Activated CD8-positive, alpha-beta T cell treated with anti-CD3 and anti-CD28 coated beads, Interleukin-2, amount 10 ng/mL, durations not matched to agents 7 days and 5 days (primary cell): ENCODE measurements at regions of chr6 and their contacts with region 1.

Region 1: DNA sequence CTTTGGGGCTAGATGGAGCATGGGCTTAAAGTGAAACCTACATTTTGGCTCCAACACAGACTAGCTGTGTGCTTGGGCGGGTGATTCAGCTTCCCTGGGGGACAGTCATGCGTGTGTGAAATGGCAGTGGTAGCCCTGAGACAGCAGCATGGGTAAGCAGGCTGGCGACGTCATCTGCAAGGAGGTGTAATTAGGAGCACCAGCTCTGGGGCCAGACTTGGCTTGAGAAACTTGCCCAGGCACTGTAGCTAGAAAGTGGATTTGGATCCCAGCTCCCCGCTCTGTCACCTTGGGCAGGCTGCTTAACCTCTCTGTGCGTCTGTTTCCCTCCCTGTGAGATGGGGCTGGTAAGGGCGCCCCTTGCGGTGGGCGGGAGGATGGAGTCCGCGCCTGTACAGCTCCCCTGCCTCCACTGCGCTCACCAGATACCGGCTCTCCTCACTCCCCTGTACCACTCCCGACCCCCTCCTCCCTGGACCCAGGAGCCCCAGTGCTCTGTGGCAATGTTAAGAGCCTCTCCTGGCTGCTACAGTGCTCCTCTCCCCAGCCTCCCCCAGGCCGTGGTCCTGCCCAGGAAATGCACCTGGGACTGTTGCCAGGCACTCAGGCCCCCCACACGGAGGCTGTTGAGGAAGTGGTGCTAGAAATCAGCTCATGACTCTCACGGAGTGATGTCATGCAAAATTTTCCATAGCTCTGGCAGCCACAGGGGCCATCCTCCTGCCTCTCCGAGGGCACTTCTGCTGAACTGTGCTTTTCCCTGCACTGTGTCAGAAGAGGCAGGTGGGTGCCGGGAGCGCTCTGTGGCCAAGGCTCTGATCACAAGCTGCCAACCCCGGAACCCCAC is 44.6 kb downstream of the SYNJ2 start:
- DNase-seq: peak; percentile 89
- ATAC-seq: peak; percentile 80
- H3K4me3 Mint-ChIP-seq: peak overlapping the region; percentile 69
- H3K27ac Mint-ChIP-seq: peak overlapping the region; percentile 99
- H3K4me1 Mint-ChIP-seq: peaks cover 52% of the 10 kb centered on the region
- H3K27me3 Mint-ChIP-seq: no peaks in the 10 kb centered on the region

Region 2: DNA sequence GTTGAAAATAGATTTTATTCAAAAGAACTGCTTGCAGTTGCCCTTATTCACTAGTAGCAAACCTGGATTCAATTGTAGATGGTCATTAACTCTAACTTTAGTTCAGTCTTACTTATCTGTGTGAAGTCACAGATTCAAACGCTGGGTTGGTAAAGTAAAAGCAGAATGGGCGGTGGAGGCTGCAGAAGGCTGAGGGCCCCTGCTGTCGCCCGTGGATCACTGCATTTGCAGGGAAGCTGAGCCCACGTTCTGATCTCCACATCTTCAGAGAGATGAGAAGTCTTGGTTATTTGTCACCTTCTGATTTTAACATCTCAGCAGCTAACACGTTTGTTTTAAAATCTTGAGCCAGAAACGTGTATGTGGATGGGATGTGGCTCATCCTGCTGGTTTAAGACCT is 128.1 kb before region 1 on chr6:
- CTCF ChIA-PET with region 1: interaction called, 15 read pairs
- POLR2A ChIA-PET with region 1: no interaction called
- DNase-seq: no peak
- ATAC-seq: peak; percentile 51
- H3K4me3 Mint-ChIP-seq: no peak overlapping the region
- H3K27ac Mint-ChIP-seq: peak overlapping the region; percentile 35
- H3K4me1 Mint-ChIP-seq: peaks cover 21% of the 10 kb centered on the region
- H3K27me3 Mint-ChIP-seq: no peaks in the 10 kb centered on the region

Region 3: GRCh38 chr6:157921685-157922367 is 104.5 kb before region 1 on chr6:
- CTCF ChIA-PET with region 1: no interaction called
- POLR2A ChIA-PET with region 1: no interaction called
- DNase-seq: no peak
- ATAC-seq: no peak
- H3K4me3 Mint-ChIP-seq: no peak overlapping the region
- H3K27ac Mint-ChIP-seq: no peak overlapping the region
- H3K4me1 Mint-ChIP-seq: peaks cover 3% of the 10 kb centered on the region
- H3K27me3 Mint-ChIP-seq: no peaks in the 10 kb centered on the region

Region 4: GRCh38 chr6:157989541-157990289 is 36.6 kb before region 1 on chr6:
- CTCF ChIA-PET with region 1: interaction called, 40 read pairs
- POLR2A ChIA-PET with region 1: interaction called, 3 read pairs
- DNase-seq: no peak
- ATAC-seq: peak; percentile 22
- H3K4me3 Mint-ChIP-seq: peak overlapping the region; percentile 75
- H3K27ac Mint-ChIP-seq: peak overlapping the region; percentile 83
- H3K4me1 Mint-ChIP-seq: peaks cover 59% of the 10 kb centered on the region
- H3K27me3 Mint-ChIP-seq: no peaks in the 10 kb centered on the region

Region 5: DNA sequence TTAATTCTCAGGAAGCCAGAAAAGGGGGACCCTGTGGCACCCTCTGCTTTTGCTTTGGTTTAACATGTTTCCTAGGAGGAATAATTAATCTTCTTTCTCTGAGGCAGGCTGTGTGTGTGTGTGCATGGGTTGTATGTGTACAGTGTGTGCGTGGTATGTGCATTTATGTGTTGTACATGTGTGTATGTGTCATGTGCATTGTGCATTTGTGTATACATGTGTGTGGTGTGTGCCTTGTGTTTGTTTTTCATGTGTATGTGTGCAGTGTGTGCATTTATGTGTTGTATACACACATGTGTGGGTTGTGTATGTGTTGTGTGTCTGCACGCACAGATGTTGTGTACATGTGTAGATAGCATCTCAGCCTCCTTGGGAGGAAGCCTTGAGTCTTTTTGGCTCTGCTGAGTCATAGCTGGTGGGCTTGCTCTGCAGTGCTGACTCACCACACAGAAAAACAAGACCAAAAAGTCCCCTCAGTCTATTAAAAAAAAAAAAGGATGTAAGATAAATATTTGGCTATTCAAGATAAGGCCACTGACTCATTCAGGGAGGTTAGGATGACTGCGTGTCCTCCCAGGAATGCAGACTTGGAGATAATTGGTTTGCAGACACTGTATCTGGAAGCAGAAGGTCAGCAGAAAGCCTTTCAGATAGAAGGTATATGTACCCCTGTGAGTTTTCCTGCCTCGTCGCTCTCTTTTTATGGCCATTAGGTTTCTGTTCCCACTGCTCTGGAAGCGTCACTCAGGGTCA is 13.9 kb after region 1 on chr6:
- CTCF ChIA-PET with region 1: interaction called, 84 read pairs
- POLR2A ChIA-PET with region 1: interaction called, 5 read pairs
- DNase-seq: peak; percentile 40
- ATAC-seq: peak; percentile 37
- H3K4me3 Mint-ChIP-seq: no peak overlapping the region
- H3K27ac Mint-ChIP-seq: peak overlapping the region; percentile 56
- H3K4me1 Mint-ChIP-seq: peaks cover 34% of the 10 kb centered on the region
- H3K27me3 Mint-ChIP-seq: no peaks in the 10 kb centered on the region

Region 6: DNA sequence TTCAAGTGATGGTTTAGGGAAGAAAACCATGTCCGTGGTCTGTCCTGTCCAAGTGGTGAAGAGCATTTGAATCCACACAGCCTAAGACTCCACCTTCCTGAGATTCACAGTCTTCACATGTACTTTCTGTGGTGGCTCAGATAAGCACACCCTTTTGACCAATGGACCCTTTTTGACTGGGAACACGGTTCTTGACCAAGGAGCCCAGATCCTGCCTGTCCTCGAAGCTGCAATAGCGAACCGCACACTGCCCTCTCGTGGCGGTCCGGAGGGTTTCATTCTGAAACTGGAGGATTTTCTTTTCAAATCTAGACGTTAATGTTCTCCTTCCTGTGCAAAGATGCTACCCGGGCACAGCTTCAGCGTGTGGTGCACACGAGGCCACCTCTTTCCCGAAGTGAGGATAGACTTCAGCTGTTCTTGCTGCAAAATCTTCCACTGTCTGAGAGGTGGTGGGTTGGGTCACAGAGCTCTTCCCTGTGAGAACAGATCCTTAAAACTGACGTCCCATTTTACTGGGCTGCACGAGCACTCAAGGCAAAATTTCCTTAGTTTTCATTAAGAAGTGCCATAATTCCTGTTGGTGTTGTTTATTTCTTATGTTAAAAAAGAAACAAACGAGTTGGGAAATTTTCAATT is 45.9 kb after region 1 on chr6:
- CTCF ChIA-PET with region 1: interaction called, 37 read pairs
- POLR2A ChIA-PET with region 1: interaction called, 6 read pairs
- DNase-seq: peak; percentile 82
- ATAC-seq: peak; percentile 70
- H3K4me3 Mint-ChIP-seq: no peak overlapping the region
- H3K27ac Mint-ChIP-seq: peak overlapping the region; percentile 70
- H3K4me1 Mint-ChIP-seq: peaks cover 38% of the 10 kb centered on the region
- H3K27me3 Mint-ChIP-seq: no peaks in the 10 kb centered on the region